AG04449 (cell line): ENCODE measurements at regions of chr11 and their contacts with region 1.

Region 1: GRCh38 chr11:20397281-20397680 is 9.8 kb downstream of the PRMT3 start:
- DNase-seq: no peak
- H3K4me3 ChIP-seq: no peak overlapping the region
- CTCF ChIP-seq: peak; percentile 53

Region 2: DNA sequence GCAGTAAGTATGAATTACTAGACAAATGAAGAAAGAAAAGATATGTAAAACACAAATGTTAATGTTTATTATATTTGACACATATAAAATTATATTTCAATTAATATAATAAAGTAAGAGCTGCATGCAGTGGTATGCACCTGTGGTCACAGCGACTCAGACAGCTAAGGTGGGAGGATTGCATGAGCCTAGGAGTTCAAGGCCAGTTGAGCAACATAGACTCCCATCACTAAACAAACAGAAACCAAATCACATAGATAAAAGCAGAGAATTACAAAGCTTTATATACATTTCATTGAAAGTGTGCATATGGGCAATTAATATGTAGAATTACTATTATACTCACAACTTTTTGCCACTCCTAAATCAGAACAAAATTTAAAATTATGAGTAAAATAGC is 103.8 kb before region 1 on chr11:
- CTCF ChIA-PET with region 1: no interaction called
- POLR2A ChIA-PET with region 1: no interaction called
- DNase-seq: no peak
- H3K4me3 ChIP-seq: no peak overlapping the region
- CTCF ChIP-seq: no peak

Region 3: DNA sequence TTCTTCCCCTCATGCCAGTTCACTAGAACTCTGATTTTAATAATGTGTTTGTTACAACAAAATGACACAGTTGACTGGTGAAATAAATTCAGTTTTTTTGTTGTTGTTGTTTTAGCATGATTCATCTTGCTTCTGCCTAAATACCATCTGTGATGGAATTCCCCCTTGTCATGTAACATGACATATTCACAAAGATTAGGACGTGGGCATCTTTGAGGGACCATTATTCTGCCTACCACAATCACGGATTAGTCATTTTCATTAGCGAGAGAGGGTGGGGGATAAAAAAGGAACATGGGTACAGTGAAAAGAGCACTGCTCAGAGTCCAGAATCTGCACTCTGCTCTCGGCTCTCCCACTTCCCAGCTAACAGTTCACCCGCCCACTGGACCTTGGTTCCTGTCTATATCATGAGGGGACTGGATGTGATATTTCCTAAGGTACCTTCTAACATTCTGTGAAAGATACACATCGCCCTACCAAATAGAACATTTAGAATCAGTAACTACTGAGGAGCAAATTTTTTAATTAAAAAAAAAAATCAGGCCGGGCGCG is 22.5 kb before region 1 on chr11:
- CTCF ChIA-PET with region 1: interaction called, 10 read pairs
- POLR2A ChIA-PET with region 1: no interaction called
- DNase-seq: no peak
- H3K4me3 ChIP-seq: no peak overlapping the region
- CTCF ChIP-seq: no peak

Region 4: DNA sequence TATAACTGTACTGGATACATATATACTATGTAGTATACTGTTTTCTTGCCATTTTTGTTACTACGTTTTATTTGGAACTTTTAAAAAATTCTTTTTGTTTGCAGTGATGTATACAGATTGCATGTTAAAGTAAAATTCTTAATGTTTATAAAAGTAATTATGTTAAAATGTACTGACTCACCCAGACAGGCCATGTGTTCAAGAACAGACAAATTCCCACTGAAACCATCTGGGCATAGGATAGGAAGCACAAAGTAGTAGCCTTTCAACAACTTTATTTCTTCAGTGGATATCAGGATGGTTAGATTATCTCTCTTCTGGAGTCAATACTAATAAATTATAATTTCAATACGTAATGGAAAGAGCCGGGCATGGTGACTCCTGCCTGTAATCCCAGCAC is 10.1 kb after region 1 on chr11:
- CTCF ChIA-PET with region 1: interaction called, 43 read pairs
- POLR2A ChIA-PET with region 1: no interaction called
- DNase-seq: no peak
- H3K4me3 ChIP-seq: no peak overlapping the region
- CTCF ChIP-seq: no peak

Region 5: DNA sequence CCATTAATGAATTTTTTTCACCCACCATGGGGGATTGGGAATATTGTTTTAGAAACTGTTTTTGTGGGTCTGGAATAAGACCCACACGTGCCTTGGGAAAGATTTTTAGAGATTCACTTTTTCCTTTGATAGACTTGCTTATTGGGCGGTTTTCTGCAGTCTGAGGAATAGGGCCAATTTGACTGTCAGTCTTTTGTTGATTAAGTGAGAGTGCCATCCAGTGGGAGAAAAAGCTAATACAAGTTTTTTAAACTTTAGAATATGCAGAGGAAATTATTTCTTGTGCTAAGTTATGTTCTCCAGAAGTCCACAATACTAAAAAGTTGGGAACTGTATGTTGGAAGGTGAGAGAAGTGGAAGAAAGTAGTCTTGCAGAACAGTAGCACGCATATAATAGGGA is 46.3 kb after region 1 on chr11:
- CTCF ChIA-PET with region 1: interaction called, 15 read pairs
- POLR2A ChIA-PET with region 1: no interaction called
- DNase-seq: no peak
- H3K4me3 ChIP-seq: no peak overlapping the region
- CTCF ChIP-seq: peak; percentile 17

Region 6: GRCh38 chr11:20609727-20610707 is 212.7 kb after region 1 on chr11:
- CTCF ChIA-PET with region 1: interaction called, 67 read pairs
- POLR2A ChIA-PET with region 1: no interaction called
- DNase-seq: no peak
- H3K4me3 ChIP-seq: peak overlapping the region; percentile 18; the same call in 1 of the 2 replicates
- CTCF ChIP-seq: peak; percentile 97